ENCODE measurements at regions of chr7 and their contacts with region 1.

Region 1: GRCh38 chr7:85815526-85815925 is 628.7 kb upstream of the SEMA3D start:
- DNase-seq: no peak
- ATAC-seq: no peak
- H3K4me3 ChIP-seq: no peak overlapping the region
- H3K4me3 Mint-ChIP-seq: no peak overlapping the region
- H3K27ac ChIP-seq: no peak overlapping the region
- H3K27ac Mint-ChIP-seq: no peak overlapping the region
- H3K4me1 ChIP-seq: no peaks in the 10 kb centered on the region
- H3K4me1 Mint-ChIP-seq: no peaks in the 10 kb centered on the region
- H3K27me3 ChIP-seq: no peaks in the 10 kb centered on the region
- H3K27me3 Mint-ChIP-seq: no peaks in the 10 kb centered on the region
- CTCF ChIP-seq: no peak

Region 2: DNA sequence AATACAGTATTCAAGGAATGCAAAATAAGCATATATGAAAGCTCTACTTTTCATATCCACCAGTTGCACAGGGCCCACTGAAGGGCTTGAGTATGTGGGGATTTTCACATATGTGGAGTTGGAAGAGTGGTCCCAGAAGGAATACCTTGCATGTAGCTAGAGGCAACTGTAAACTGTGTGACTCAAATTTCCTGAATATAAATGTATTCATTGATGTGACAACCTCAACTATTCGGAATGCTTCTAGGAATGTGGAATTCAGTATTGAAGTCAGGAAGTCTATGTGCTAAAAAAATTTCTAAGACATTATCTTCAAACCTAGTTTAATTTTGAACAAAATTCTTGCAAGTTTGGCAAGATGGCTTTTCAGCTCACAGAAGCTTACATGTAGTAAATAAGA is 66.8 kb after region 1 on chr7:
- CTCF ChIA-PET with region 1: no interaction called
- POLR2A ChIA-PET with region 1: no interaction called
- intact Hi-C with region 1: loop called in 1 of 2 experiments (anchors 10 kb)
- DNase-seq: no peak
- ATAC-seq: no peak
- H3K4me3 ChIP-seq: no peak overlapping the region
- H3K4me3 Mint-ChIP-seq: no peak overlapping the region
- H3K27ac ChIP-seq: no peak overlapping the region
- H3K27ac Mint-ChIP-seq: no peak overlapping the region
- H3K4me1 ChIP-seq: no peaks in the 10 kb centered on the region
- H3K4me1 Mint-ChIP-seq: no peaks in the 10 kb centered on the region
- H3K27me3 ChIP-seq: no peaks in the 10 kb centered on the region
- H3K27me3 Mint-ChIP-seq: no peaks in the 10 kb centered on the region
- CTCF ChIP-seq: no peak